ENCODE measurements at regions of chr21 and their contacts with region 1.

Region 1: DNA sequence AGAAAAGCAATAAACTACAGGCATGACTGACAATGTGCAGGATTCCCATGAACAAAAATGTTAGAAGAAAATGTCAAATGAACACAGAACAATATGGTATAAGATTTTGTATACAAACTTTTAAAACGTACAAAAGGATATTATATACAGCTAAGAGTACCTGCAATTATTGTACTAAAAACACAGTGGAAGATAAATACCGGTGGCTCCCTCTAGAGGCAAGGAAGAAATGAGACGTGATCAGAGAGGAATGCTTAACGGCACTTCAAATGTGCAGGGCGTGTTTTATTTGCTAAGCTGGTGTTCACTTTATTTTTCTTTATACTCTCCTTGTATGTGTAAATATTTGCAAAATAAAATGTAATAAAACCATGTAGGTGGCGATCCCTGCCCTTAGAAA is 191.8 kb upstream of the SAMSN1 start:
- DNase-seq: no peak
- ATAC-seq: peak; percentile 81
- H3K4me3 ChIP-seq: no peak overlapping the region
- H3K27ac ChIP-seq: peak overlapping the region; percentile 20; the same call in 1 of the 2 replicates
- H3K4me1 ChIP-seq: peaks cover 23% of the 10 kb centered on the region
- H3K27me3 ChIP-seq: no peaks in the 10 kb centered on the region
- CTCF ChIP-seq: peak; percentile 51 to 65 (median 61)
- EP300 ChIP-seq: no peak
- POLR2A ChIP-seq: no peak
- RAD21 ChIP-seq: peak; percentile 86

Region 2: DNA sequence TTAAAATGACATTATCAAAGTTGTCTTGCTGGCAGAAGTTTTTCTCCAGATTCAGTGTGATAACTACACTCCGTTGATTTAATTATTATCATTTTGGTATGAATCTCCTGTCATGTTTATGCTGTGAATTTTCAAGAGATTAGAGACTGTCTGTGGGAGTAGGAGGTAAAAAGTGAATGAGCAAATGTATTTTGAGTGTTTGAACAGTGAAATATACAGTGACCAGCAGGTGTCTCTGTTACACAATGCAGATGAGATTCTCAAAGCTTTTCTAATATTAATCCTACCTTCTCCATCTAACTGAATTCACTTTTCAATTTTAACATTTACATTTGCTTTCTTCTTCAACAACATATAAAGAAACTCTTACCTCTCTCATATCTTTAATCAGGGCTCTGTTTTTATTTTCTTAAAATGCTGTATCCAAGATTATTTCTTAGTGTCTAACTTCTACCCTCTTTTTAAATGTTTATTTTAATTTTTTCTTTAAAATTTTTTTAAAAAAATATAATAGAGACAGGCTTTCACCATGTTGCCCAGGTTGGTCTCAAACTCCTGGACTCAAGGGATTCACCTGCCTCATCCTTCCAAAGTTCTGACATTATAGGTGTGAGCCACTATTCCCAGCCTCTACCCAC is 334.1 kb before region 1 on chr21:
- CTCF ChIA-PET with region 1: interaction called, 11 read pairs
- POLR2A ChIA-PET with region 1: no interaction called
- RAD21 ChIA-PET with region 1: interaction called, 5 read pairs
- SMC1A ChIA-PET with region 1: interaction called, 13 read pairs
- in situ Hi-C with region 1: no loop called
- intact Hi-C with region 1: loop called (anchors 2 kb)
- DNase-seq: peak; percentile 9
- ATAC-seq: peak; percentile 78
- H3K4me3 ChIP-seq: no peak overlapping the region
- H3K27ac ChIP-seq: no peak overlapping the region
- H3K4me1 ChIP-seq: no peaks in the 10 kb centered on the region
- H3K27me3 ChIP-seq: no peaks in the 10 kb centered on the region
- CTCF ChIP-seq: peak; percentile 42 to 72 (median 60); a peak in 5 of 6 replicates
- EP300 ChIP-seq: no peak
- POLR2A ChIP-seq: no peak
- RAD21 ChIP-seq: peak; percentile 83

Region 3: GRCh38 chr21:14523234-14523633 is 214.7 kb before region 1 on chr21:
- CTCF ChIA-PET with region 1: interaction called, 7 read pairs
- POLR2A ChIA-PET with region 1: interaction called, 5 read pairs
- RAD21 ChIA-PET with region 1: interaction called, 23 read pairs
- SMC1A ChIA-PET with region 1: interaction called, 29 read pairs
- in situ Hi-C with region 1: no loop called
- intact Hi-C with region 1: no loop called
- DNase-seq: no peak
- ATAC-seq: peak; percentile 87
- H3K4me3 ChIP-seq: peak overlapping the region; percentile 29; the same call in 1 of the 2 replicates
- H3K27ac ChIP-seq: peak overlapping the region; percentile 50
- H3K4me1 ChIP-seq: peaks cover 32% of the 10 kb centered on the region
- H3K27me3 ChIP-seq: no peaks in the 10 kb centered on the region
- CTCF ChIP-seq: no peak
- EP300 ChIP-seq: no peak; a peak in 1 of 4 replicates
- POLR2A ChIP-seq: no peak
- RAD21 ChIP-seq: no peak

Region 4: GRCh38 chr21:14545906-14546480 is 191.9 kb before region 1 on chr21 and contains the start of gene SAMSN1:
- CTCF ChIA-PET with region 1: interaction called, 14 read pairs
- POLR2A ChIA-PET with region 1: no interaction called
- RAD21 ChIA-PET with region 1: interaction called, 12 read pairs
- SMC1A ChIA-PET with region 1: interaction called, 9 read pairs
- in situ Hi-C with region 1: no loop called
- intact Hi-C with region 1: no loop called
- DNase-seq: peak; percentile 78
- ATAC-seq: peak; percentile 86
- H3K4me3 ChIP-seq: peak within 1 kb of the TSS; percentile 76
- H3K27ac ChIP-seq: peak within 1 kb of the TSS; percentile 87
- H3K4me1 ChIP-seq: peaks cover 12% of the 10 kb centered on the region; the same call in 1 of the 2 replicates
- H3K27me3 ChIP-seq: no peaks in the 10 kb centered on the region
- CTCF ChIP-seq: no peak
- EP300 ChIP-seq: peak in 1 of 2 experiments; percentile 66; a peak in 1 of 4 replicates
- POLR2A ChIP-seq: peak; percentile 83
- RAD21 ChIP-seq: 0 out of 2 replicates have a peak, but pooled peaks have one; percentile 22
- polyA plus RNA-seq, gene SAMSN1: 90.4 to 102 TPM

Region 5: GRCh38 chr21:14591882-14592281 is 146.0 kb before region 1 on chr21:
- CTCF ChIA-PET with region 1: interaction called, 11 read pairs
- POLR2A ChIA-PET with region 1: no interaction called
- RAD21 ChIA-PET with region 1: interaction called, 17 read pairs
- SMC1A ChIA-PET with region 1: interaction called, 6 read pairs
- in situ Hi-C with region 1: no loop called
- intact Hi-C with region 1: no loop called
- DNase-seq: no peak
- ATAC-seq: peak; percentile 79
- H3K4me3 ChIP-seq: no peak overlapping the region
- H3K27ac ChIP-seq: no peak overlapping the region
- H3K4me1 ChIP-seq: peaks cover 9% of the 10 kb centered on the region; the same call in 1 of the 2 replicates
- H3K27me3 ChIP-seq: no peaks in the 10 kb centered on the region
- CTCF ChIP-seq: no peak
- EP300 ChIP-seq: peak in 1 of 2 experiments; percentile 16; a peak in 2 of 4 replicates
- POLR2A ChIP-seq: no peak
- RAD21 ChIP-seq: no peak

Region 6: GRCh38 chr21:14762734-14763694 is 25.1 kb after region 1 on chr21:
- CTCF ChIA-PET with region 1: interaction called, 16 read pairs
- POLR2A ChIA-PET with region 1: no interaction called
- RAD21 ChIA-PET with region 1: interaction called, 27 read pairs
- SMC1A ChIA-PET with region 1: interaction called, 38 read pairs
- in situ Hi-C with region 1: no loop called
- intact Hi-C with region 1: no loop called
- DNase-seq: peak; percentile 82
- ATAC-seq: peak; percentile 97
- H3K4me3 ChIP-seq: peak overlapping the region; percentile 59
- H3K27ac ChIP-seq: peak overlapping the region; percentile 87
- H3K4me1 ChIP-seq: peaks cover 10% of the 10 kb centered on the region
- H3K27me3 ChIP-seq: no peaks in the 10 kb centered on the region
- CTCF ChIP-seq: no peak
- EP300 ChIP-seq: peak; percentile 89 to 98
- POLR2A ChIP-seq: no peak
- RAD21 ChIP-seq: 0 out of 2 replicates have a peak, but pooled peaks have one; percentile 24

Region 7: DNA sequence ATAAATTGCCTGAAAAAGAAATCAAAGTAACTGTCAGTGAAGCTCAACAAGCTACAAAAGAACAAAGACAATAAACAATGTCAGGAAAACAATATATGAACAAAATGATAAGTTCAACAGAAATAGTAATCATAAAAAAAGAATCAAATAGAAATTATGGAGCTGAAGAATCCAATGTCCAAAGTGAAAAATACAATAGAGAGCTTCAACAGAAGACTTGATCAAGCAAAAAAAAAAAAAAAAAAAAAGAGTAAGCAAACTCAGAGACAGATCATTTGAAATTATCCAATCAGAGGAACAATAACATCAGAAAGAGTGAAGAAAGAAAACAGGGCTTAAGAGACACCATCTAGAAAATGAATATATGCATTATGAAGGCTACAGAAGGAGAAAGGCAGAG is 59.6 kb after region 1 on chr21:
- CTCF ChIA-PET with region 1: no interaction called
- POLR2A ChIA-PET with region 1: no interaction called
- RAD21 ChIA-PET with region 1: no interaction called
- SMC1A ChIA-PET with region 1: no interaction called
- in situ Hi-C with region 1: no loop called
- intact Hi-C with region 1: no loop called
- DNase-seq: no peak
- ATAC-seq: no peak
- H3K4me3 ChIP-seq: no peak overlapping the region
- H3K27ac ChIP-seq: no peak overlapping the region
- H3K4me1 ChIP-seq: no peaks in the 10 kb centered on the region
- H3K27me3 ChIP-seq: no peaks in the 10 kb centered on the region
- CTCF ChIP-seq: no peak
- EP300 ChIP-seq: no peak
- POLR2A ChIP-seq: no peak
- RAD21 ChIP-seq: no peak

Region 8: DNA sequence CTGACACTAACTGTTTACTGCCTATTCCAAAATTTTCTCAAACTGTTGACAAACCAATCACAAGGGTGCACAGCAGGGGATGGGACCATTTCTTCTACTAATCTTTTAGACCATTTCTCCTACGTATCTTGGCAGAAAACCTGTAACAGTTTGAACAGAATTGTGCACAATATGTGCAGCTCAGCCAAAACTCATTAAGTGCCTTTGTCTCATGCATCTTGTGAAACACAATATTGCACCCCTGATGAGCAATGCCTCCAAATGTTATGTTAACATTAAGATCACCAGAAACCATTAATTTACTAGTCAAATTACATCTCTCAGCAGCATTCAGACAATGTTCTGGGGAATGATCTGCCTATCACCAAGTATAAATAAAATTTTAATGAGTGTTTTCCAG is 79.4 kb after region 1 on chr21:
- CTCF ChIA-PET with region 1: no interaction called
- POLR2A ChIA-PET with region 1: no interaction called
- RAD21 ChIA-PET with region 1: no interaction called
- SMC1A ChIA-PET with region 1: no interaction called
- in situ Hi-C with region 1: no loop called
- intact Hi-C with region 1: no loop called
- DNase-seq: no peak
- ATAC-seq: no peak
- H3K4me3 ChIP-seq: no peak overlapping the region
- H3K27ac ChIP-seq: no peak overlapping the region
- H3K4me1 ChIP-seq: no peaks in the 10 kb centered on the region
- H3K27me3 ChIP-seq: no peaks in the 10 kb centered on the region
- CTCF ChIP-seq: no peak
- EP300 ChIP-seq: no peak
- POLR2A ChIP-seq: no peak
- RAD21 ChIP-seq: no peak